BJ (cell line): ENCODE measurements at regions of chr11 and their contacts with region 1.

Region 1: GRCh38 chr11:78645226-78646202 is 70.8 kb upstream of the NARS2 start:
- DNase-seq: no peak
- H3K4me3 ChIP-seq: no peak overlapping the region
- H3K27me3 ChIP-seq: peaks cover 4% of the 10 kb centered on the region
- CTCF ChIP-seq: peak; percentile 90

Region 2: GRCh38 chr11:78659326-78660270 is 14.1 kb after region 1 on chr11:
- CTCF ChIA-PET with region 1: interaction called, 48 read pairs
- POLR2A ChIA-PET with region 1: no interaction called
- DNase-seq: no peak
- H3K4me3 ChIP-seq: no peak overlapping the region
- H3K27me3 ChIP-seq: no peaks in the 10 kb centered on the region
- CTCF ChIP-seq: no peak

Region 3: GRCh38 chr11:78715639-78716311 is 70.3 kb after region 1 on chr11:
- CTCF ChIA-PET with region 1: interaction called, 77 read pairs
- POLR2A ChIA-PET with region 1: no interaction called
- DNase-seq: peak; percentile 22
- H3K4me3 ChIP-seq: no peak overlapping the region
- H3K27me3 ChIP-seq: no peaks in the 10 kb centered on the region
- CTCF ChIP-seq: peak; percentile 76

Region 4: DNA sequence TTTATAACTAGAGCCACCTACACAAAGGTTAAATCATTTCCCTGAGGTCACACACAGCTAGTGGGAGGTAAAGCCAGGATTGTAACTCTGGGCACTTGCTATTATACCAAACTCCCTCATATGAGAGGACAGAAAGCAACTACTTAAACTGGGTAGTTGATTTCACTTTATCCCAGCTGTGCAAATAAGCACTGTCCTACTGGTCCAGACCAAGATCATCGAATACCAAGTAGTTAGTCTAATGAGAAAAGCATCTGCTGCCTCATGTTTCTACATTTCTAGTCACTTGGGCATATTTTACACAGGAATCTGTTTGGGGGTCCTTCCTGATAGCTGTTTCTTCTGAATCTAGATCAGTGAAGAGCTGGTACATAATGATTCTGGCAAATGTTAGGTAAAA is 107.8 kb after region 1 on chr11:
- CTCF ChIA-PET with region 1: no interaction called
- POLR2A ChIA-PET with region 1: no interaction called
- DNase-seq: no peak
- H3K4me3 ChIP-seq: no peak overlapping the region
- H3K27me3 ChIP-seq: no peaks in the 10 kb centered on the region
- CTCF ChIP-seq: no peak

Region 5: DNA sequence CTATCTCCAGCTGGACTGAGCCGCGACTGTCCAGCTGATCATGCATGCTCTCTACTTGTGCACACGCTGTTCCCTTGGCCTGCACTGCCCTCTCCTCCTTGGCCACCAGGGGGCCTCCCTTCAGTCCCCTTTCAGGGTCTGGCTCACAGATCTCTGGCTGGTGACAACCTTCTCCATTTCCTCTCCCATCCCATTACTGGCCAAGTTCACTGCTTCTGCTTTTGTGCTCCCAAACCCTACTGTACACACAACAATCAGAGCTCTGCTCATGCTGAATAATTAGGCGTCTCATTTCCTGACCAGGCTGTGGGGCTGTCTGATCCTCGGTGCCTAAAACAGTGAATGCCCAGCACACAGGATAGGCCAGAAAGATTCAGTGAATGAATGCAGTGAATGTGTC is 153.1 kb after region 1 on chr11:
- CTCF ChIA-PET with region 1: interaction called, 41 read pairs
- POLR2A ChIA-PET with region 1: no interaction called
- DNase-seq: no peak
- H3K4me3 ChIP-seq: no peak overlapping the region
- H3K27me3 ChIP-seq: no peaks in the 10 kb centered on the region
- CTCF ChIP-seq: peak; percentile 88

Region 6: DNA sequence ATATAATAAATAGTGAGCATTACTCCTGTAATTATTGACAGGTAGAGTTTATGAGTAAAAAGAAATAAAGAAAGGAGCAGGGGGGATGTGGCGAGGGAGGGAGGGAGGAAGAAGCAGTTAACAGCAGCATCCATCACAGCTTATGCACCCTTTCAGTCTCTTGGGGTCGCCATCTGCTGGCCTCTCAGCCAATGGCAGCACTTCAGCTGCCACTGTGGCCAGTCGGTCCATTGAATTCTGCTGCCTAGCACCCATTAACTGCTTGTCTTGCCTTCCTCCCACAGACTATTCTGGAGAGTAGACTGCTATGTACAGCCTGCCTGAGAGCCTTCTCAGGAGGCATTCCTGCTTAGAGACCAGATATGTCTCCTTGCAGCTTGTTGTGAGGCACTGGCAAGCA is 407.0 kb after region 1 on chr11:
- CTCF ChIA-PET with region 1: interaction called, 15 read pairs
- POLR2A ChIA-PET with region 1: no interaction called
- DNase-seq: no peak
- H3K4me3 ChIP-seq: no peak overlapping the region
- H3K27me3 ChIP-seq: 0 out of 2 replicates have a peak, but pooled peaks cover 2% of the 10 kb centered on the region
- CTCF ChIP-seq: 0 out of 2 replicates have a peak, but pooled peaks have one; percentile 28

Region 7: DNA sequence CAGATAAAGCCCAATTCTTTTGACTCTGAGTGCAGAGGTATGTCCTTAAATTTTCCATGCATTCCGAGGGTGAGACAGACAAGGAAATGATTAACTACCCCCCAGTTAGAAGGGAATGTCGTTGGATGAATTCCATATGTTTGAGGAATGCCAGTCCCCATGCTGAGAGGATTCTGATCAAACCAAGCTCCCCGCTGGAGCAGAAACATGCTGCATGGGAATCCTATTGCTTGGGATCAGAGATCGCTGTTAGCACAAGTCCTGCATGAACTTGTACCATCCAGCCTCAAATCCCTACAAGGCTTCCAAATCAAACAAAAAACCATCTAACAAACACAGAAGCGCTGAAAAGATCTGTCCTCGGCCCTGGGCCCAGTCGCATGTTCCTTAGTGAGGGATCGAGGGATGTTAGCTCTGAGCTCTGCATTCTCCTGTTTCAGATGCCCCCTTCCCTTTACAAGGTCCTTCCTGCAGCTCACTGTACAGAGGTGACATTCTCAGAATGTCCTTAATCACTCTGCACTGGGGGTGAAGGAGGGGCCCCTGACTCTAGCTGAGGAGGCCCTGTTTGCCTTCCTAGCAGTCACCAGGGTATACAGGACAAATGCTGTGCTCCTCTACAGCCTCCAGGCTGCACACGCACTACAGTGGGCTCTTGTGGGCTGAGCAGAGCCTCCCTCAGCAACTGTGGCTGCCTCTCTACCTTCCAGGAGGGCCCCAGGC is 441.9 kb after region 1 on chr11:
- CTCF ChIA-PET with region 1: interaction called, 24 read pairs
- POLR2A ChIA-PET with region 1: no interaction called
- DNase-seq: peak; percentile 34
- H3K4me3 ChIP-seq: no peak overlapping the region
- H3K27me3 ChIP-seq: no peaks in the 10 kb centered on the region
- CTCF ChIP-seq: no peak

Region 8: DNA sequence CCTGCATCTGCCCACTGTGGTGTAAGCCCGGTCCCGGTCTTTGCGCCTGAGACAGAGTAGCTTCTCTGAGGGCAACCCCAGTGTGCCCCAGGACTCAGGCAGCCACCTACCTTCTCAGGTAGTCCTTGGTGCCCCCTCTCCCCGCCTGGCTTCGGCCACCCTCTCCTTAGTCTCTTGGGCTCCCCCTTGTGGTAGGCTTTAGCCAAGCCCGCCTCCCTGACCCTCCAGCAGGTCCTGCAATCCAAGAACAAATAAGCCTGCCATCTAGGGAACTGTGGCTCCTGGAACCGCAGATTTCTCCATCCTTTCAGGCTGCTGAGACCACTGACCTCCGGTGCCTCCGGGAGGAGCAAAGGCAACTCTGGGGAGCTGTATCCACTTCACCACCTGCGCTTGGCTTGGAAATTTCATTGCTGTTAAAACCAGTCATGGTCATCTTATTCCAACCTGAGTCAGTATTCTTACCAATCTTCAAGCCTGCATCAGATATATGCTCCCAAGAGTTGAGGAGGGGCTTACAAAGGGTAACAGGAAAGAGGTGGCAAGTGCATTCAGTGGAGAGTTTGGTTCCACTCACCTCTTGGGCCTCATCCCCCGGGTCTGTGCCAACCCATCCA is 848.1 kb after region 1 on chr11:
- CTCF ChIA-PET with region 1: interaction called, 50 read pairs
- POLR2A ChIA-PET with region 1: no interaction called
- DNase-seq: peak; percentile 5
- H3K4me3 ChIP-seq: no peak overlapping the region
- H3K27me3 ChIP-seq: no peaks in the 10 kb centered on the region
- CTCF ChIP-seq: peak; percentile 98